T-cell (primary cell): ENCODE measurements at regions of chr18 and their contacts with region 1.

Region 1: DNA sequence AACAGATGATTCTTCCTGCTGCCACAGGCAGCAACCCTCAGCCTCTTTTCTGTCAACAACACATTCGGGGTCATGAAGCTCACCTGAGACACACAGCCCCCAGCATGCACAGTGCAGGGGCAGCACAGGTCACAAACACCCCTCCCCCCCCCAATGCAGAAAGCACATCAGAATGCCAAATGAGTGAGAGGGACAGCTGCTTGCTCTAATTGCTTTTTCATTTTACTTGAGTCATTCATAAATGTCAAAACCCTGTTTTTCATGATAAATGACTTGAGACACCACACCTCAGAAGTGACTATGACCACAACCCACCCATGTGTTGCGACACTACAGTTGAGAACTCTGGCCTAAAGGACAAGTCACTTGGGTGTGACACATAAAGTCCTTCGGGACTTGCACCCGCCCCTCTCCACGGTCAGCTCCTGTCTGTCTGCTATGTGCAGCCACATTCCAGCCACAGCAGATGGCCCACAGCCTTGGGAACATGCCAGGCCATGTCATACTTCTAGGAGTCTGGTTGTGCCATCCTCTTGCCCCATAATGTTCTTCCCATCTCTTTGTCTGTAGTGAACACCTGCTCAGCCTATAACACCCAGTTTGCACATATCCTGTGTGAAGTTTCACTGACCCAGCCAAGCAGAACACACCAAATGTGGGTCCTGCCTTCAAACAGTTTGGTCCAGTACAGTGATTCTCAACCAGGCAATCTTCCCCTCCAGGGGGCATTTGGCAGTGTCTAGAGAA is 30.2 kb upstream of the RIOK3 start:
- DNase-seq: peak in 22 of 35 experiments; percentile 5 to 53 (median 29)
- ATAC-seq: peak in 1 of 4 experiments; percentile 60
- H3K4me3 ChIP-seq: no peak overlapping the region
- H3K4me3 Mint-ChIP-seq: peak overlapping the region in 1 of 3 donors; percentile 17
- H3K27ac ChIP-seq: no peak overlapping the region
- H3K27ac Mint-ChIP-seq: peak overlapping the region in 1 of 2 donors; percentile 10
- H3K4me1 ChIP-seq: no peaks in the 10 kb centered on the region
- H3K4me1 Mint-ChIP-seq: peaks cover 0 to 14% (median 13%) of the 10 kb centered on the region in 3 donors
- H3K27me3 ChIP-seq: no peaks in the 10 kb centered on the region
- H3K27me3 Mint-ChIP-seq: no peaks in the 10 kb centered on the region

Region 2: DNA sequence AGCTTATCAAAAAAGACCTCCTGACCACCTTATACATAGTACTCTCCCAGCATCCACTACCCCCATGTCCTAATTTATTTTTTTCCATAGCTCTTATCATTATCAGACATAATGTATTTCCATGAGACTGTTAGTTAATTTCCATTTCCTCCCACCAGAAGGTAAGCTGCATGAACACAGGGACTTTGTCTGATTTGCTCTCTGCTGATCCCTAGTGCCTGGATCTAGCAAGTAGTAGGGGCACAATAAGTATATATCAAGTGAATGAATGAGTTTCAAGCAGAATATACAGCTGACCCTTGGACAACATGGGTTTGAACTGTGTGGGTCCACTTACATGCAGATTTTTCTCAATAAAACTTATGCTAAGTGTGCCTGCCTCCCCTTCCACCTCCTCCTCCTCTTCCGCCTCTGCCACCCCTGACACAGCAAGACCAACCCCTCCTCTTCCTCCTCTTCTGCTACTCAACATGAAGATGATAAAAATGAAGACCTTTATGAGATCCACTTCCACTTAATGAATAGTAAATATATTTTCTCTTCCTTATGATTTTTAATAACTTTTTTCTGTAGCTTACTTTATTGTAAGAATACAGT is 1058.9 kb before region 1 on chr18:
- CTCF ChIA-PET with region 1: no interaction called
- POLR2A ChIA-PET with region 1: interaction called in 1 of 2 experiments, 12 read pairs
- DNase-seq: peak in 1 of 35 experiments; percentile 50
- ATAC-seq: peak in 2 of 4 experiments; percentile 58 to 63
- H3K4me3 ChIP-seq: no peak overlapping the region
- H3K4me3 Mint-ChIP-seq: no peak overlapping the region
- H3K27ac ChIP-seq: no peak overlapping the region
- H3K27ac Mint-ChIP-seq: no peak overlapping the region
- H3K4me1 ChIP-seq: no peaks in the 10 kb centered on the region
- H3K4me1 Mint-ChIP-seq: peaks cover 0 to 5% (median 4%) of the 10 kb centered on the region in 3 donors
- H3K27me3 ChIP-seq: peaks cover 0 to 2% of the 10 kb centered on the region in 2 experiments
- H3K27me3 Mint-ChIP-seq: no peaks in the 10 kb centered on the region

Region 3: GRCh38 chr18:23398401-23398800 is 24.4 kb before region 1 on chr18:
- CTCF ChIA-PET with region 1: no interaction called
- POLR2A ChIA-PET with region 1: no interaction called
- DNase-seq: no peak
- ATAC-seq: peak in 1 of 4 experiments; percentile 16
- H3K4me3 ChIP-seq: no peak overlapping the region
- H3K4me3 Mint-ChIP-seq: peak overlapping the region in 1 of 3 donors; percentile 27
- H3K27ac ChIP-seq: no peak overlapping the region
- H3K27ac Mint-ChIP-seq: peak overlapping the region; percentile 15 to 75
- H3K4me1 ChIP-seq: peaks cover 14 to 15% of the 10 kb centered on the region in 2 experiments
- H3K4me1 Mint-ChIP-seq: peaks cover 22 to 31% (median 30%) of the 10 kb centered on the region in 3 donors
- H3K27me3 ChIP-seq: no peaks in the 10 kb centered on the region
- H3K27me3 Mint-ChIP-seq: no peaks in the 10 kb centered on the region

Region 4: DNA sequence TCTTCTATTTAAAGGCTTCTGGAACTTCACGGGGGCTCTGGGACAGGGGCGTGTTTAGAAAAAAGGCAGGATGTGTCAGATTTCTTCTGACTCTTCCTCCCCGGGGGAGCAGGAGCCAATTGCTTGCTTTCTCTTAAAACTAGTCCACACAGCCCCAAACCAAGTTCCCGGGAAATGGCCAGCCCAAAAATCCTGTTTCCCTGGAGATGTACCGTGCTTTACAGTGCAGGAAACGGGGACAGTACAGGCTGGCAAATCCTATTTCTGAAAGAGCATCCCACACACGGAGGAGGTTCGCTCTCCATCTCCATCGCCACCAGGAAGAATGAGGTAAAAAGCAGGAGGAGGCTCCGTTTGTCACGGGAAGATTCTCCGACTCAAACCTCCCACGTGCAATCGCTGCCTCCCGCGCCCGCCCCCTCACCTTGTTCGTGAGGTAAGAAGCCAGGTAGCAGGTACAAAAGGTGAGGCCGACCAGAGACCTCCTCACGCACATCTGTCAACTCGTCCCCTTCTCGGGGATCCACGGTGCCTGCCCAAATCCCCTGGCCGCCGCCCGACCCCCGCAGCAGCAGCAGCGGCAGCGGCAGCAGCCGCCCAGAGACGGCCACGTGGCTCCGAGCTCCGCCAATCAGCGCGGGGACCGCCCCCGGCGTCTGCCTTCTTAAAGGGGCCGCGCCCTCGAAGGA is 14.7 kb after region 1 on chr18:
- CTCF ChIA-PET with region 1: no interaction called
- POLR2A ChIA-PET with region 1: no interaction called
- DNase-seq: peak; percentile 43 to 91 (median 70)
- ATAC-seq: peak; percentile 97 to 100 (median 99)
- H3K4me3 ChIP-seq: peak overlapping the region; percentile 75 to 84
- H3K4me3 Mint-ChIP-seq: peak overlapping the region; percentile 85 to 90 (median 87)
- H3K27ac ChIP-seq: no peak overlapping the region
- H3K27ac Mint-ChIP-seq: peak overlapping the region in 1 of 2 donors; percentile 28
- H3K4me1 ChIP-seq: peaks cover 2 to 12% of the 10 kb centered on the region in 2 experiments
- H3K4me1 Mint-ChIP-seq: peaks cover 15 to 22% (median 18%) of the 10 kb centered on the region in 3 donors
- H3K27me3 ChIP-seq: peaks cover 0 to 4% of the 10 kb centered on the region in 2 experiments
- H3K27me3 Mint-ChIP-seq: no peaks in the 10 kb centered on the region

Region 5: GRCh38 chr18:23935804-23936203 is 513.0 kb after region 1 on chr18:
- CTCF ChIA-PET with region 1: no interaction called
- POLR2A ChIA-PET with region 1: no interaction called
- DNase-seq: peak in 25 of 35 experiments; percentile 7 to 47 (median 18)
- ATAC-seq: peak; percentile 65 to 83 (median 68)
- H3K4me3 ChIP-seq: no peak overlapping the region
- H3K4me3 Mint-ChIP-seq: peak overlapping the region in 2 of 3 donors; percentile 15 to 56
- H3K27ac ChIP-seq: no peak overlapping the region
- H3K27ac Mint-ChIP-seq: peak overlapping the region; percentile 67 to 78
- H3K4me1 ChIP-seq: peaks cover 40 to 44% of the 10 kb centered on the region in 2 experiments
- H3K4me1 Mint-ChIP-seq: peaks cover 55 to 62% (median 59%) of the 10 kb centered on the region in 3 donors
- H3K27me3 ChIP-seq: no peaks in the 10 kb centered on the region
- H3K27me3 Mint-ChIP-seq: no peaks in the 10 kb centered on the region